SK-N-SH (cell line): ENCODE measurements at regions of chr3 and their contacts with region 1.

Region 1: DNA sequence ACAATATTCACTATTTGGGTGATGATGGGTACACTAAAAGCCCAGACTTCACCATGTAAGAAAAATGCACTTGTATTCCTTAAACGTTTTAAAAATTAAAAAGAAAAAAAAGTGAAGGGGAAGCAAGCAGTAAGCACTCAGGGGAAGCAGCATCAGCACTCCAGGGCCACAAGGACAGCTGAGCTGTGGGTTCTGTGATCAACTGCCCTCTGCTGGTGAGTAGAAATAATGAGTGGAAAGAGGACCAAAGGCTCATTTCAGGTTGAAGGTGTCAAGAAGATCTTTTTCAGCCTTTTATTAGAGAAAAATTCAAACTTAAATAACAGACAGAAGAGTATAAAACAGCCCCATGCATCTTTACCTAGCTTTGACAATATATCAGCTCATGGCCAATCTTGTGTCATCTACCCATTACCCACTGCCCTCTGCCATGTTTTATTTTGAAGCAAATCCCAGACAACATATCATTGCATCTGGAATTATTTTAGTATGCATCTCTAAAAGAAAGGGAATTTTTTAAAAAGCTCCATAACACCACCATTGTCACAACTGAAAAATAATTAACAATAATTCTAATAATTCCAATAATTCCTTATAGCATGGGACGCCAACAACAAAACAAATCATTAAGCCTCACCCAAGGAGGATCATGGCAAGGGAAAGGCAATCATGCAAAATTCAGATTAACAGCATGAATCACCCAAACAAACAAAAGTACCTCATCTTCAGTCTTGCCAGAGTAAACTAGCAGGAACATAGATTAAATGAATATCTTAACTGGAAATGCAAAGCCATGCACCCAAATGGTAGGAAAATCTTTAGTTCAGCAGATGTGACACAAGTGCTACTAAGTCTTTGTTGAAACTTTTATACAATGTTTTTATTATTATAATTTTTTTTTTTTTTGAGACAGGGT is 42.5 kb downstream of the TAMM41 start:
- DNase-seq: peak; percentile 57
- H3K4me3 ChIP-seq: no peak overlapping the region
- H3K27ac ChIP-seq: no peak overlapping the region
- H3K4me1 ChIP-seq: no peaks in the 10 kb centered on the region
- H3K27me3 ChIP-seq: no peaks in the 10 kb centered on the region
- CTCF ChIP-seq: peak; percentile 69
- EP300 ChIP-seq: no peak
- RAD21 ChIP-seq: peak; percentile 70

Region 2: GRCh38 chr3:11651900-11652299 is 152.3 kb before region 1 on chr3:
- CTCF ChIA-PET with region 1: interaction called, 21 read pairs
- POLR2A ChIA-PET with region 1: interaction called, 3 read pairs
- DNase-seq: peak; percentile 43
- H3K4me3 ChIP-seq: no peak overlapping the region
- H3K27ac ChIP-seq: no peak overlapping the region
- H3K4me1 ChIP-seq: peaks cover 0 to 2% of the 10 kb centered on the region in 2 experiments; a peak in 2 of 4 replicates
- H3K27me3 ChIP-seq: no peaks in the 10 kb centered on the region
- CTCF ChIP-seq: peak; percentile 64
- EP300 ChIP-seq: no peak
- RAD21 ChIP-seq: peak; percentile 72

Region 3: GRCh38 chr3:11680509-11680908 is 123.7 kb before region 1 on chr3:
- CTCF ChIA-PET with region 1: no interaction called
- POLR2A ChIA-PET with region 1: no interaction called
- DNase-seq: no peak
- H3K4me3 ChIP-seq: no peak overlapping the region
- H3K27ac ChIP-seq: no peak overlapping the region
- H3K4me1 ChIP-seq: no peaks in the 10 kb centered on the region
- H3K27me3 ChIP-seq: no peaks in the 10 kb centered on the region
- CTCF ChIP-seq: no peak
- EP300 ChIP-seq: no peak
- RAD21 ChIP-seq: no peak

Region 4: GRCh38 chr3:11774294-11774877 is 29.8 kb before region 1 on chr3:
- CTCF ChIA-PET with region 1: interaction called, 11 read pairs
- POLR2A ChIA-PET with region 1: no interaction called
- DNase-seq: peak; percentile 76
- H3K4me3 ChIP-seq: no peak overlapping the region
- H3K27ac ChIP-seq: no peak overlapping the region
- H3K4me1 ChIP-seq: peaks cover 0 to 8% of the 10 kb centered on the region in 2 experiments; a peak in 2 of 4 replicates
- H3K27me3 ChIP-seq: no peaks in the 10 kb centered on the region
- CTCF ChIP-seq: peak; percentile 51
- EP300 ChIP-seq: no peak
- RAD21 ChIP-seq: peak; percentile 58

Region 5: DNA sequence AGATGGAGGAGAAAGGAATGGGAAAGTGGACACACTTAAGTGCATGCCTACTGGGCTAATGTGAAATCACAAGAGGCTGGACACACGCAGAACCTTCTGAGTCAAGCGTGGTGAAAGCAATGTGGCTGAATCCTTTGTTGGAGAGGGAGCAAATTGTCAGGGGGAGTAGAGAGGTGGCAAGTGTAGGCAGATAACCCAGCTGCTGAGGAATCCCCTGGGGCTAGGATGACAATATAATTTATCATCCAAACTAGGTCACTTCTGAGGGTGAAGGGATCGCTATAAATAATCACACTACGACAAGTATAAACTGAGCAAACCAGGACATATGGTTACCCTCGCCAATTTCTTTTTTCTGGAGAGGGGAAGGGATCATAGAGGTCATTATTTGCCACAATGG is 13.8 kb after region 1 on chr3:
- CTCF ChIA-PET with region 1: interaction called, 15 read pairs
- POLR2A ChIA-PET with region 1: no interaction called
- DNase-seq: peak; percentile 27
- H3K4me3 ChIP-seq: no peak overlapping the region
- H3K27ac ChIP-seq: no peak overlapping the region
- H3K4me1 ChIP-seq: no peaks in the 10 kb centered on the region; a peak in 1 of 4 replicates
- H3K27me3 ChIP-seq: no peaks in the 10 kb centered on the region
- CTCF ChIP-seq: no peak
- EP300 ChIP-seq: no peak
- RAD21 ChIP-seq: no peak

Region 6: DNA sequence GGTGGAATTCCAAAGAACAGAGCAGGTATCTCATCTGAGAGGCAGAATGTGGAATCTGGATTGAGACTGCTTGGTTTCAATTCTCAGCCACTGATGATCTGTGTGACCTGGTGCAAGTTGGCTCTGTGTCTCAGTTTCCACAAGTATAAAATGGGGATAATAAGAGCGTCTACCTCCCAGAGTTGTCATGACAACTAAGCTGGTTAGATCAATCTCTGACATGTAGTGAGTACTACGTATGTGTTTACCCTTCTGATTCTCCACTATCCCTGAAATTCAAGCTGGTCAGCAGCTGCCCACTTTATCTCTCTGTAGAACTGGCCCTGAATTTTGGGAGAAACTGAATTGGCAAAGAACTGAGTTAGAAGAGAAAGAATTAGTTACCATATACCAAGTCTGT is 48.2 kb after region 1 on chr3:
- CTCF ChIA-PET with region 1: no interaction called
- POLR2A ChIA-PET with region 1: no interaction called
- DNase-seq: no peak
- H3K4me3 ChIP-seq: no peak overlapping the region
- H3K27ac ChIP-seq: no peak overlapping the region
- H3K4me1 ChIP-seq: no peaks in the 10 kb centered on the region
- H3K27me3 ChIP-seq: peaks cover 7% of the 10 kb centered on the region; the same call in 1 of the 2 replicates
- CTCF ChIP-seq: no peak
- EP300 ChIP-seq: no peak
- RAD21 ChIP-seq: no peak

Region 7: DNA sequence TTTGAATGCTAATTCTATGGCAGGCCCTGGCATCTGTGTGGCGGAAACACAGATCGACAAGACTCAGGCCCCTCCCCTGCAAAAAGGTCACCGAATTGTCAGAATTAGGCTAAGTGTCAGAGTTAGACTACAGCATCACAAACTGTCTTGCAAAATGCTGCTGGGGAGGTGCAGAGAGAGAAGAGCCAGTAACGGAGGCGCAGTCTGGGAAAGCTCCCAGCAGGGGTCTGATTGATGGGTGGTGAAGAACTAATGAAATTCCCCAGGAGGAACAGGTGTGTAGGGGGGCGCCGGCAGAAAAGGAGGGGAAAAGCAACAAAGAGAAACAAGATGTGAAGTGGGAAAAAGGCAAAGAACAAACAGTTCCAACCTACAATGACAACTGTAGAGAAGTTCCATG is 115.2 kb after region 1 on chr3:
- CTCF ChIA-PET with region 1: no interaction called
- POLR2A ChIA-PET with region 1: no interaction called
- DNase-seq: no peak
- H3K4me3 ChIP-seq: no peak overlapping the region
- H3K27ac ChIP-seq: no peak overlapping the region
- H3K4me1 ChIP-seq: no peaks in the 10 kb centered on the region; a peak in 1 of 4 replicates
- H3K27me3 ChIP-seq: no peaks in the 10 kb centered on the region; the same call in 1 of the 2 replicates
- CTCF ChIP-seq: no peak
- EP300 ChIP-seq: no peak
- RAD21 ChIP-seq: no peak